OCI-LY7 (cell line): ENCODE measurements at regions of chr18 and their contacts with region 1.

Region 1: GRCh38 chr18:57931038-57931437 is 113.0 kb upstream of the NEDD4L start:
- DNase-seq: peak; percentile 23
- H3K4me3 ChIP-seq: no peak overlapping the region
- H3K27ac ChIP-seq: no peak overlapping the region
- H3K4me1 ChIP-seq: peaks cover 4% of the 10 kb centered on the region
- CTCF ChIP-seq: no peak

Region 2: GRCh38 chr18:57970356-57971080 is 39.5 kb after region 1 on chr18:
- CTCF ChIA-PET with region 1: no interaction called
- POLR2A ChIA-PET with region 1: no interaction called
- intact Hi-C with region 1: loop called (anchors 2 kb)
- DNase-seq: no peak
- H3K4me3 ChIP-seq: no peak overlapping the region
- H3K27ac ChIP-seq: no peak overlapping the region
- H3K4me1 ChIP-seq: no peaks in the 10 kb centered on the region
- CTCF ChIP-seq: peak; percentile 30; the same call in 1 of the 2 replicates